Caco-2 (cell line): ENCODE measurements at regions of chr4 and their contacts with region 1.

Region 1: DNA sequence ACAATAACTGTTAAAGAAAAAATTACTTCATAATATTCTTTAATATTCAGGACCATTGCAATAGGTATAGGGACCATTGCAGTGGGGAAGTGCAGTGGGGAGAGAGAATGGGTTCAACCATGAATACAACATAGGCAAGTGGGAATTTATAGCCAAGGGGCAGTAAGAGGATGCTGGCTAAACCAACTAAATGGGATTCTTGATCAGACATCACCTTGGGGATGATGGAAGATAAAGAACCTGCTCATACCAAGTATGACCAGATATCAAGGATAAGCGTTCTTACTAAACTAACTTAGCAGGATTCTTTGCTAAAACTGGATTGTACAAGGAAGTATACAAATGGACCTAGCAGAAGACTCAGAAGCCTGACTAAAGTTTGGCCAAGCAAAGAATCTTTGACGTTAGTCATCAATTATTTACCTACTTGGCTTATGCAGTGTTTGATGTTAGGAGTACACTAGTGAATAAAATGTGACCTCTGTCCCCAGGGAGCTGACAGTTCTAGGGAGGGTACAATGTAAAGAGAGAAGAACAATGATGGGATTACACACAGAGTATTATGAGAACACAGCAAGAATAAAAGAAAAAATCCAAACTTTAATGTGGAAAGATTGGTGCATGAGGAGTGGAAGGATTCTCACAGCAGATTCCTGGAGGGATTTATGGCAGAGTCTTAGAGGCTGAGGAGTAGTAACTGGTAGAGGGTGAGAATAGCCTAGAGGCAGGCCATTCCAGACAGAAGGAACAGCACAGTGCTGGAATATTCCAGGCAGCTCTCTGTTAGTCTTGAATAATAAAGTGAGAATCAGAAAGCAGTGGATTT is 54.7 kb upstream of the MYOZ2 start:
- DNase-seq: peak; percentile 80 to 82
- H3K4me3 ChIP-seq: no peak overlapping the region
- H3K4me3 Mint-ChIP-seq: peak overlapping the region; percentile 34
- H3K27ac Mint-ChIP-seq: peak overlapping the region; percentile 86
- H3K4me1 ChIP-seq: peaks cover 37% of the 10 kb centered on the region
- H3K4me1 Mint-ChIP-seq: peaks cover 23% of the 10 kb centered on the region
- H3K27me3 ChIP-seq: no peaks in the 10 kb centered on the region
- H3K27me3 Mint-ChIP-seq: no peaks in the 10 kb centered on the region
- CTCF ChIP-seq: no peak

Region 2: DNA sequence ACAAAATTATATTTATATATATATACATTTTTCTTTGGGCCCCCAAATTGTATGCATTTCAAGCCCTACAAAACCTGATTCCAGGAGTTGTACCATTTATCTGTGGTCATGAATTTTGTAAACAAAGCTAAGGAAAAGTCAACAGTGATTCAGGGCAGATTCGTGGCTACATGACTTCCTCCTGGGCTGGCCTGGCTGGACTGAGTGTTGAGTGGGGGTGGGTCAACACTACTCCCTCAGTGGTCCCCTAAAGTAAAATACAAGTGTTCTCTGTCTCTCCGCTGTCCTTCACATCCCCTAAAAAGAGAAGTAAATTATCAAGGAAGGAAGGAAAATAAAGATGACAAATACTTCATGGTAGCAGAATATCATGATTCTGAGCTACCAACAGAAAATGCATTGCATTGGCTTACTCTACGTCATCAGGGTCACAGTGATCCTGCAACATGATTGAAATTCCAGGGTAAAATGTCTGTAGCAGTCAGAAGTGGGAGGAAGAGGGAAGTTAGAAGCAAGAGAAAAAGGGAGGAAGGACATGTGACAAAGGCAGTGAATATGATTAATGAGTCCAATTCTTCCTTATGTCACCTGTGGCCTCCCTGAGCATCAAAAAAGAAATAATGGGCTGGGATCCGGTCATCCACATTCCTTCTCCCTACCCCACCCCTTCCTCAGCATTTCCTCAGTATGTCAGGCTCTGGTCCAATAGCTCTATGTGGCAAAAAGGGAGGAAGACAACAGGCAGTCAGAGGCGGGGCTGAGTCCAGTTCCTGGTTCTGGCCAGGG is 12.3 kb after region 1 on chr4:
- CTCF ChIA-PET with region 1: no interaction called
- POLR2A ChIA-PET with region 1: no interaction called
- intact Hi-C with region 1: loop called (anchors 1 kb)
- DNase-seq: peak; percentile 37 to 42
- H3K4me3 ChIP-seq: no peak overlapping the region
- H3K4me3 Mint-ChIP-seq: peak overlapping the region; percentile 28
- H3K27ac Mint-ChIP-seq: peak overlapping the region; percentile 86
- H3K4me1 ChIP-seq: peaks cover 34% of the 10 kb centered on the region
- H3K4me1 Mint-ChIP-seq: peaks cover 40% of the 10 kb centered on the region
- H3K27me3 ChIP-seq: no peaks in the 10 kb centered on the region
- H3K27me3 Mint-ChIP-seq: no peaks in the 10 kb centered on the region
- CTCF ChIP-seq: no peak

Region 3: GRCh38 chr4:119113033-119113655 is 32.2 kb after region 1 on chr4:
- CTCF ChIA-PET with region 1: no interaction called
- POLR2A ChIA-PET with region 1: no interaction called
- intact Hi-C with region 1: loop called (anchors 1 kb)
- DNase-seq: no peak
- H3K4me3 ChIP-seq: no peak overlapping the region
- H3K4me3 Mint-ChIP-seq: no peak overlapping the region
- H3K27ac Mint-ChIP-seq: no peak overlapping the region
- H3K4me1 ChIP-seq: peaks cover 29% of the 10 kb centered on the region
- H3K4me1 Mint-ChIP-seq: peaks cover 17% of the 10 kb centered on the region
- H3K27me3 ChIP-seq: no peaks in the 10 kb centered on the region
- H3K27me3 Mint-ChIP-seq: no peaks in the 10 kb centered on the region
- CTCF ChIP-seq: no peak

Region 4: GRCh38 chr4:119138046-119138445 is 57.1 kb after region 1 on chr4:
- CTCF ChIA-PET with region 1: no interaction called
- POLR2A ChIA-PET with region 1: no interaction called
- intact Hi-C with region 1: loop called (anchors 1 kb)
- DNase-seq: peak in 1 of 2 experiments; percentile 33
- H3K4me3 ChIP-seq: no peak overlapping the region
- H3K4me3 Mint-ChIP-seq: no peak overlapping the region
- H3K27ac Mint-ChIP-seq: peak overlapping the region; percentile 70
- H3K4me1 ChIP-seq: peaks cover 60% of the 10 kb centered on the region
- H3K4me1 Mint-ChIP-seq: peaks cover 50% of the 10 kb centered on the region
- H3K27me3 ChIP-seq: no peaks in the 10 kb centered on the region
- H3K27me3 Mint-ChIP-seq: no peaks in the 10 kb centered on the region
- CTCF ChIP-seq: no peak